AG04449 (cell line): ENCODE measurements at regions of chr13 and their contacts with region 1.

Region 1: GRCh38 chr13:35818633-35819067 is 312.5 kb downstream of the DCLK1 start:
- DNase-seq: no peak
- H3K4me3 ChIP-seq: no peak overlapping the region
- CTCF ChIP-seq: peak; percentile 48

Region 2: GRCh38 chr13:35210261-35210660 is 608.4 kb before region 1 on chr13:
- CTCF ChIA-PET with region 1: interaction called, 17 read pairs
- POLR2A ChIA-PET with region 1: no interaction called
- DNase-seq: no peak
- H3K4me3 ChIP-seq: no peak overlapping the region
- CTCF ChIP-seq: no peak

Region 3: DNA sequence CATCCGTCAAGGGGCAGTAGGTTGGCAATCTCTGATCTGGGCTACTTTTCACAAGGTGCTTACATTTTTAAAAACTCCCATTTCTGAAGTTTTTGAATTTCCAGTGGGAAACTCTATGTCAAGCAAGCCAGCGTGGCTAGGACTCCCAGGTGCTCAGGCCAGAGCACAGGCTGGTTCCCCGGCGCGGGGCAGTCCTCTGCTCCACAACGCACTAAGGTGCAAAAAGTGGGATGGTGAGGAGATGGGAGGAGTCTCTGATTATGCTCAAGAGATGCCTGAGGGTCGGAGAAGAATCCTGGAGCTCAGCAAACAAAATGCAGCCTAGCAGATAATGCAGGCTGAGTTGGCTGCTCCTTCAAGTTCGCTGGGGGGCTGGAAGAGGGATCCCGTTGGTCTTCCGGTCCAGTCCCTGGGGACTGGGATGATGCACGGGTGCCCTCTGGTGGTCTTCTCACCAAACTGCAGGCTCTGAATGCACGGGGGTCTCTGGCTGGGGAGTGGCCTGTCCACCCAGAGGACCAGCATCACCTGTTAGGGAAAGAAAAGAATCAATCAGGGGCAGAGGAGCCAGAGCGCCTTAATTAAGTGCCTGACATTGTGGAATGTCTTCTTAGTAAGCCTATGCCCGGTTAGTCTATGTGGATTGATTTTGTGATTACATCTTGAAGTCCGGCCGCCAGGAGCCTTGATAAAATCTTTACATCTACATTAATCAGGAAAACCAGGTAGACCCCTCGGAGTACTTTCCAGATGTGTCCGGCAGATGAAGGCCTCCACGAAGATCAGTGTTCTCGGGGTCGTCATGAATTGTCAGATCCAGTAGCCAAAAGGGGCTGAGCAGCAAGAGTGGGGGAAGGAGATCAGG is 97.7 kb before region 1 on chr13:
- CTCF ChIA-PET with region 1: interaction called, 21 read pairs
- POLR2A ChIA-PET with region 1: no interaction called
- DNase-seq: no peak
- H3K4me3 ChIP-seq: peak overlapping the region; percentile 35
- CTCF ChIP-seq: peak; percentile 98

Region 4: GRCh38 chr13:35804901-35805300 is 13.7 kb before region 1 on chr13:
- CTCF ChIA-PET with region 1: interaction called, 66 read pairs
- POLR2A ChIA-PET with region 1: no interaction called
- DNase-seq: no peak
- H3K4me3 ChIP-seq: no peak overlapping the region
- CTCF ChIP-seq: no peak

Region 5: GRCh38 chr13:35836446-35836845 is 17.8 kb after region 1 on chr13:
- CTCF ChIA-PET with region 1: interaction called, 84 read pairs
- POLR2A ChIA-PET with region 1: no interaction called
- DNase-seq: no peak
- H3K4me3 ChIP-seq: no peak overlapping the region
- CTCF ChIP-seq: no peak

Region 6: DNA sequence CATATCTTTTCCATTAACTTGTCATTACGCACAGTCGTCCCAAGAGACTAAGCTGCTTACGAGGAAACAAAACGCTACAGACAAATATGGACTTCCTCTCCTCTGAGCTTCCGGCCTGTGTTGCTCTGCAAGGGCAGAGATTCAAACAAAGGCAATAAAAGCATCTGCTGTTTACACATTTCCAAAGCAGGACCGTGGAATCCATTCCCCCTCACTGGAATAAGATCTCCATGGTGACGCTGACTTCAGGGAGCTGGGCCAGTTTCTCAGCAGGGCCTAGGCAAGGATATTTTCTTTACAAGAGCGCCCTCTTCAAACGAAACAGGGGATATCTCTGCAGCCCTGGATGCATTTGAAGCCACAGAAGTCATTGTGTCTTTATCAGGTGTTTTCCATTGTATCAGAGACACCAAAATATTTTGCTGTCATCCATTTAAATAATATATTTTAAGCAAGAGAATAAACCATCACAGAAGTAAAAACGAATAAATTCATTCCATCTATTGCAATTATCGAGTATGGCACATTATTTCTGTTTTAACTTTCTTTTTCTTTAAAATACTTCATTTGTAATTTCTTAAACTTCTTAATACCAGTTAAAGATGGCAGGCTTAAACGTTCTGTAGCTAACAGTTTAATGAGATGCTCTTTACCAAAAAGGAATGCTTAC is 135.0 kb after region 1 on chr13:
- CTCF ChIA-PET with region 1: interaction called, 36 read pairs
- POLR2A ChIA-PET with region 1: no interaction called
- DNase-seq: peak; percentile 64
- H3K4me3 ChIP-seq: peak overlapping the region; percentile 36
- CTCF ChIP-seq: peak; percentile 69

Region 7: GRCh38 chr13:35976126-35976525 is 157.5 kb after region 1 on chr13:
- CTCF ChIA-PET with region 1: no interaction called
- POLR2A ChIA-PET with region 1: no interaction called
- DNase-seq: no peak
- H3K4me3 ChIP-seq: no peak overlapping the region
- CTCF ChIP-seq: no peak